ENCODE measurements at regions of chr17 and their contacts with region 1.

Region 1: GRCh38 chr17:82457997-82458864 is at the start of gene NARF:
- DNase-seq: peak; percentile 89 to 97 (median 97)
- ATAC-seq: peak; percentile 98
- H3K4me3 ChIP-seq: peak within 1 kb of the TSS; percentile 75
- H3K4me3 Mint-ChIP-seq: peak within 1 kb of the TSS; percentile 85 to 94 (median 88)
- H3K27ac ChIP-seq: peak within 1 kb of the TSS; percentile 97
- H3K27ac Mint-ChIP-seq: peak within 1 kb of the TSS; percentile 96 to 99 (median 98)
- H3K4me1 ChIP-seq: peaks cover 20% of the 10 kb centered on the region in 2 donors
- H3K4me1 Mint-ChIP-seq: peaks cover 22 to 47% (median 30%) of the 10 kb centered on the region in 7 donors
- H3K27me3 ChIP-seq: no peaks in the 10 kb centered on the region
- H3K27me3 Mint-ChIP-seq: no peaks in the 10 kb centered on the region
- total RNA-seq, gene NARF: 59.8 to 188 (median 67.1) TPM

Region 2: GRCh38 chr17:82037113-82037888 is 420.9 kb before region 1 on chr17 and contains the start of gene DCXR:
- CTCF ChIA-PET with region 1: interaction called, 3 read pairs
- POLR2A ChIA-PET with region 1: no interaction called
- intact Hi-C with region 1: loop called in 1 of 2 experiments (anchors 10 kb)
- DNase-seq: peak; percentile 87 to 97 (median 93)
- ATAC-seq: peak; percentile 96
- H3K4me3 ChIP-seq: peak within 1 kb of the TSS; percentile 71
- H3K4me3 Mint-ChIP-seq: peak within 1 kb of the TSS; percentile 82 to 94 (median 89)
- H3K27ac ChIP-seq: peak within 1 kb of the TSS; percentile 75
- H3K27ac Mint-ChIP-seq: peak within 1 kb of the TSS; percentile 61 to 94 (median 90)
- H3K4me1 ChIP-seq: peaks cover 7% of the 10 kb centered on the region in 2 donors
- H3K4me1 Mint-ChIP-seq: peaks cover 14 to 29% (median 24%) of the 10 kb centered on the region in 7 donors
- H3K27me3 ChIP-seq: no peaks in the 10 kb centered on the region
- H3K27me3 Mint-ChIP-seq: no peaks in the 10 kb centered on the region
- total RNA-seq, gene DCXR: 63.0 to 130 (median 83.6) TPM

Region 3: GRCh38 chr17:82418001-82418986 is 39.9 kb before region 1 on chr17 and contains the starts of genes HEXD and OGFOD3:
- CTCF ChIA-PET with region 1: no interaction called
- POLR2A ChIA-PET with region 1: interaction called, 17 read pairs
- intact Hi-C with region 1: loop called (anchors 1 kb)
- DNase-seq: peak; percentile 78 to 96 (median 92)
- ATAC-seq: peak; percentile 94
- H3K4me3 ChIP-seq: peak within 1 kb of the TSS; percentile 89
- H3K4me3 Mint-ChIP-seq: peak within 1 kb of the TSS; percentile 78 to 89 (median 84)
- H3K27ac ChIP-seq: peak within 1 kb of the TSS; percentile 94
- H3K27ac Mint-ChIP-seq: peak within 1 kb of the TSS; percentile 80 to 92 (median 86)
- H3K4me1 ChIP-seq: peaks cover 5 to 20% of the 10 kb centered on the region in 2 donors
- H3K4me1 Mint-ChIP-seq: peaks cover 23 to 42% (median 31%) of the 10 kb centered on the region in 7 donors
- H3K27me3 ChIP-seq: no peaks in the 10 kb centered on the region
- H3K27me3 Mint-ChIP-seq: no peaks in the 10 kb centered on the region
- total RNA-seq, gene HEXD: 62.7 to 153 (median 66.9) TPM
- total RNA-seq, gene OGFOD3: 21.9 to 34.6 (median 32.3) TPM

Region 4: GRCh38 chr17:82518826-82519810 is 60.9 kb after region 1 on chr17 and contains the start of gene FOXK2:
- CTCF ChIA-PET with region 1: no interaction called
- POLR2A ChIA-PET with region 1: interaction called, 11 read pairs
- intact Hi-C with region 1: loop called (anchors 1 kb)
- DNase-seq: peak; percentile 90 to 99 (median 95)
- ATAC-seq: peak; percentile 99
- H3K4me3 ChIP-seq: peak within 1 kb of the TSS; percentile 67
- H3K4me3 Mint-ChIP-seq: peak within 1 kb of the TSS; percentile 82 to 99 (median 93)
- H3K27ac ChIP-seq: peak within 1 kb of the TSS; percentile 92
- H3K27ac Mint-ChIP-seq: peak within 1 kb of the TSS; percentile 71 to 93 (median 87)
- H3K4me1 ChIP-seq: peaks cover 4 to 16% of the 10 kb centered on the region in 2 donors
- H3K4me1 Mint-ChIP-seq: peaks cover 15 to 36% (median 30%) of the 10 kb centered on the region in 7 donors
- H3K27me3 ChIP-seq: no peaks in the 10 kb centered on the region
- H3K27me3 Mint-ChIP-seq: no peaks in the 10 kb centered on the region
- total RNA-seq, gene FOXK2: 36.5 to 67.1 (median 48.4) TPM

Region 5: DNA sequence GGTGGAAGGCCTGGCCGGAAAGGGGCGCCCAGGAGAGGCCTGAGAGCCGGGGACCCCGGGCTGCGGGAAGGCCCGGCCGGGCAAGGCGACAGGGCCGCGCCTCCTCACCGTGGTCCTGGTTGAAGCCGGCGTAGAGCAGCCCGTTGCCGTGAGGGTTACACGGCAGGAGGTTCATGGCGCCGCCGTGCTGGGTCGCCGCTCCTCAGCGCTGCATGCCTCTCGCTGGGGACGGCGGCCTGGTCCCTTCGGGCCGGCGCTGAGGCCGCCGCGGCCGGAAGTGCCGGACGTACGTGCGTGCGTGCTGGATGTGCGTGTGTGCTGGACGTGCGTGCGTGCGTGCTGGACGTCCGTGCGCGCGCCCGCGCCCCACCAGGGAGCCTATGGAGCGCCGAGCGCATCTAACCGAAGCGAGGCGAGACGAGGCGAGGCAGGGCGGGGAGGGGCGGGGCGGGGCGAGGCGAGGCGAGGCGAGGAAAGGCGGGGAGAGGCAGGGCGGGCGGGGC is 190.0 kb after region 1 on chr17 and contains the start of gene WDR45B:
- CTCF ChIA-PET with region 1: no interaction called
- POLR2A ChIA-PET with region 1: no interaction called
- intact Hi-C with region 1: loop called in 1 of 2 experiments (anchors 1 kb)
- DNase-seq: peak; percentile 68 to 90 (median 87)
- ATAC-seq: peak; percentile 97
- H3K4me3 ChIP-seq: peak within 1 kb of the TSS; percentile 90
- H3K4me3 Mint-ChIP-seq: peak within 1 kb of the TSS; percentile 78 to 92 (median 84)
- H3K27ac ChIP-seq: peak within 1 kb of the TSS; percentile 94
- H3K27ac Mint-ChIP-seq: peak within 1 kb of the TSS; percentile 65 to 88 (median 83)
- H3K4me1 ChIP-seq: peaks cover 11 to 22% of the 10 kb centered on the region in 2 donors
- H3K4me1 Mint-ChIP-seq: peaks cover 23 to 39% (median 30%) of the 10 kb centered on the region in 7 donors
- H3K27me3 ChIP-seq: no peaks in the 10 kb centered on the region
- H3K27me3 Mint-ChIP-seq: no peaks in the 10 kb centered on the region
- total RNA-seq, gene WDR45B: 44.9 to 91.6 (median 68.4) TPM

Region 6: DNA sequence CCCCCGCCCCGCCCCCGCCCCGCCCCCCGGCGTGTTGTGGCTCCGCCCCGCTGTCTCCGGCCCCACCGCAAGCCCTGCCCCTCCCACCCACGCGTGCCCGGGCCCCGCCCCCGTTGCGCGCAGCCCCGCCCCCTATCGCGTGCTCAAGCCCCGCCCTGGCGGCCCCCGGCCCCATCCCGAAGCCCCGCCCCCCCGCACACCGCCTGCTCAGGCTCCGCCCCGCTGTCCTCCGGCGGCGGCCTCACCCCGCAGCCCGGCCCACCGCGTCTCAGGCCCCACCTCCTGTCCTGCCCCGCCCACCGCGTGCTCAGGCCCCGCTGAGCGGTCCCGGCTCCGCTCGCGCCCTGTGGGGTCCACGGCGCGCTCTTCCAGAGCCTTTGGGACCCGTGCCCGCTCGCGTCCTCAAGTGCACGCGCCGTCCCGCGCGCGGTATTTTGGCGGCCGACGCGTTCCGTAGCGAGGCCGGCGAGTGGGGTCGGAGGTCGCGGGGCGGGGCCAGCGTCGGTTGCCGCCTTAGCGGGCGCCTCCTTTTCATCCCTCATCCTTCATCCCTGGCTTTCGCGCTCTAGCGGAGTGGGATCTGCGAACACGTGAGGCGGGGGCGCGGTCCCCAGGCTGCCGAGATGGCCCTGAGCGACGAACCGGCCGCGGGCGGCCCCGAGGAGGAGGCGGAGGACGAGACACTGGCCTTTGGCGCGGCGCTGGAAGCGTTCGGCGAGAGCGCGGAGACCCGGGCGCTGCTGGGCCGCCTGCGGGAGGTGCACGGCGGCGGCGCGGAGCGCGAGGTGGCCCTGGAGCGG is 293.5 kb after region 1 on chr17 and contains the start of gene TBCD:
- CTCF ChIA-PET with region 1: no interaction called
- POLR2A ChIA-PET with region 1: no interaction called
- intact Hi-C with region 1: loop called in 1 of 2 experiments (anchors 5 kb)
- DNase-seq: peak; percentile 80 to 95 (median 90)
- ATAC-seq: peak; percentile 91
- H3K4me3 ChIP-seq: peak within 1 kb of the TSS; percentile 80
- H3K4me3 Mint-ChIP-seq: peak within 1 kb of the TSS; percentile 68 to 91 (median 80)
- H3K27ac ChIP-seq: peak within 1 kb of the TSS; percentile 74
- H3K27ac Mint-ChIP-seq: peak within 1 kb of the TSS in 7 of 9 donors; percentile 11 to 77 (median 58)
- H3K4me1 ChIP-seq: peaks cover 7 to 8% of the 10 kb centered on the region in 2 donors
- H3K4me1 Mint-ChIP-seq: peaks cover 18 to 34% (median 26%) of the 10 kb centered on the region in 7 donors
- H3K27me3 ChIP-seq: no peaks in the 10 kb centered on the region
- H3K27me3 Mint-ChIP-seq: no peaks in the 10 kb centered on the region
- total RNA-seq, gene TBCD: 99.2 to 255 (median 226) TPM

Measured in naive thymus-derived CD4-positive, alpha-beta T cell (primary cell).